Panc1 (cell line): ENCODE measurements at regions of chr3 and their contacts with region 1.

Region 1: DNA sequence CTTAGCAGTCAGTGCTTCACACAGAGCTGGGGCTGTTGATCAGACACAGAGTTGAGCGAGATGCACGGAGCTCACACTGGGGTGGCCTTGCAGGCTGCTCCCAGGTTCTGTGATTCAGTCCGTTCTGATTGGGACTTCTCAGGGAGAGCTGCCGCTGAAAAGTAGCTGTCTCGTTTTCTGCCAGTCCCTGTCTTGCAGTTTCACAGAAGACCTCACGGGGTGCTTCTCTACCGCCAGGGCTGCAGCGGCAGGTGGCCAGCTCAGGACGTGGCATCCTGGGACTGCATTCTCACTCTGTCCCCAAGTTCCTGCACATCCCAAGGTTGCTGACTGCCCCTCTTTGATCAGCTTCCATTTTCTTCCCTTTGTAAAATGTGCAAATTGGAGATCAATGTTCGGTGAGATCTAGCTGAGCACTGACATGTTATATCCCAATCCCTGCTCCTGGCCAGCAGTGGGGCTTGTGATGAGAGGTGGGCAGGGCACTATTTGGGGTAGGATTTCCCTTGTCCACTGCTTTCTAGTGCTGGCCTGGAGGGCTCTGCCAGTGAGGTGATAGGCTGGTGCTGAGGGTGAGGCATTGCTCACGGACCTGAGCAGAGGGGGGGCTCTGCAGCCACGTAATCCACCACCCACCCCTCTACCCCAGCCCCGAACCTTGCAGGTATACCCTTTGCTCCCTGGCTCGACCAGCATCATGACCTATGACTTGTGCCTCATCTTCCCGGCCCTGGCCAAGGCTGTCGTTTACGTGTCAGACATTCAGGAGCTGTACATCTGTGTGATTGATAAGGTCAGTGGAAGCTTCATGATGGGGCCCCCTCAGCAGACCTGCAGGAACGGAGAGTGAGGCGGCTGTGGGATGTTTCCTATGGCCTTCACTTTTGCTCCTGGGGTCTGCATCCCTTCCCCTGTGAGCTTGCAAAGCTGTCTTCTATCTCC is 5.3 kb upstream of the TXNRD3 start:
- DNase-seq: no peak
- ATAC-seq: peak; percentile 72
- H3K4me3 ChIP-seq: no peak overlapping the region
- H3K27ac ChIP-seq: no peak overlapping the region
- H3K4me1 ChIP-seq: 0 out of 2 replicates have a peak, but pooled peaks cover 3% of the 10 kb centered on the region
- H3K27me3 ChIP-seq: peaks cover 20% of the 10 kb centered on the region
- CTCF ChIP-seq: peak; percentile 64

Region 2: DNA sequence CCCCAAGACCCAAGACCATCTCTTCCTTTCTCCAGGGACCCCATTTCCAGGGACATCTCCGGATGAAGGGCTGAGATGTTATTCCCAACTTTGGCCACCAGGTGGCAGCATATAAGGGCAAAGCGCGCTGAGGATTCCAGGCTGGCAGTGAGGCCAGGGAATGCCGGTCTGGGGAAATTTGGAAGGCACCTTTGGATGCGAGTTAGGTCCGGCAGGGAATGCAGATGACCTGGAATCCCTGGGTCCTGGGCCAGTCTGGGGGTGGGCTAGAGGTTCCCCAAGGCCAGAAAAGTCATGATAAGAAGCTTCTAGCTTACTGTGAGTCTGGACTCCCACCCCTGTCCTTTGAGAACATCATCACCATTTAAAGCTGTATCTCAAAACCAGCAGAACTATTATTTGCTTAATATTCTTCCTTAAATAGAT is 137.8 kb before region 1 on chr3:
- CTCF ChIA-PET with region 1: no interaction called
- POLR2A ChIA-PET with region 1: no interaction called
- in situ Hi-C with region 1: no loop called
- intact Hi-C with region 1: loop called (anchors 10 kb)
- DNase-seq: peak; percentile 25
- ATAC-seq: peak; percentile 52
- H3K4me3 ChIP-seq: no peak overlapping the region
- H3K27ac ChIP-seq: no peak overlapping the region
- H3K4me1 ChIP-seq: peaks cover 4% of the 10 kb centered on the region; the same call in 1 of the 2 replicates
- H3K27me3 ChIP-seq: peaks cover 8% of the 10 kb centered on the region
- CTCF ChIP-seq: peak; percentile 95

Region 3: GRCh38 chr3:126714276-126714900 is 54.2 kb after region 1 on chr3:
- CTCF ChIA-PET with region 1: interaction called, 12 read pairs
- POLR2A ChIA-PET with region 1: no interaction called
- in situ Hi-C with region 1: no loop called
- intact Hi-C with region 1: no loop called
- DNase-seq: no peak
- ATAC-seq: no peak
- H3K4me3 ChIP-seq: no peak overlapping the region
- H3K27ac ChIP-seq: no peak overlapping the region
- H3K4me1 ChIP-seq: no peaks in the 10 kb centered on the region
- H3K27me3 ChIP-seq: no peaks in the 10 kb centered on the region
- CTCF ChIP-seq: no peak